Activated naive CD4-positive, alpha-beta T cell treated with anti-CD3 and anti-CD28 coated beads for 36 hours (primary cell): ENCODE measurements at regions of chr2 and their contacts with region 1.

Region 1: GRCh38 chr2:32627814-32628579 is at the start of gene TTC27:
- DNase-seq: peak; percentile 97
- H3K4me3 Mint-ChIP-seq: peak within 1 kb of the TSS; percentile 89
- H3K27ac Mint-ChIP-seq: peak within 1 kb of the TSS; percentile 87
- H3K4me1 Mint-ChIP-seq: peaks cover 31% of the 10 kb centered on the region
- H3K27me3 Mint-ChIP-seq: no peaks in the 10 kb centered on the region
- total RNA-seq, gene TTC27: 25.2 to 27.5 TPM

Region 2: GRCh38 chr2:32168513-32168912 is 459.5 kb before region 1 on chr2:
- CTCF ChIA-PET with region 1: no interaction called
- intact Hi-C with region 1: loop called (anchors 1 kb)
- DNase-seq: no peak
- H3K4me3 Mint-ChIP-seq: no peak overlapping the region
- H3K27ac Mint-ChIP-seq: no peak overlapping the region
- H3K4me1 Mint-ChIP-seq: peaks cover 46% of the 10 kb centered on the region
- H3K27me3 Mint-ChIP-seq: no peaks in the 10 kb centered on the region

Region 3: GRCh38 chr2:32553829-32554432 is 74.1 kb before region 1 on chr2:
- CTCF ChIA-PET with region 1: no interaction called
- intact Hi-C with region 1: loop called (anchors 2 kb)
- DNase-seq: no peak
- H3K4me3 Mint-ChIP-seq: no peak overlapping the region
- H3K27ac Mint-ChIP-seq: no peak overlapping the region
- H3K4me1 Mint-ChIP-seq: no peaks in the 10 kb centered on the region
- H3K27me3 Mint-ChIP-seq: no peaks in the 10 kb centered on the region

Region 4: DNA sequence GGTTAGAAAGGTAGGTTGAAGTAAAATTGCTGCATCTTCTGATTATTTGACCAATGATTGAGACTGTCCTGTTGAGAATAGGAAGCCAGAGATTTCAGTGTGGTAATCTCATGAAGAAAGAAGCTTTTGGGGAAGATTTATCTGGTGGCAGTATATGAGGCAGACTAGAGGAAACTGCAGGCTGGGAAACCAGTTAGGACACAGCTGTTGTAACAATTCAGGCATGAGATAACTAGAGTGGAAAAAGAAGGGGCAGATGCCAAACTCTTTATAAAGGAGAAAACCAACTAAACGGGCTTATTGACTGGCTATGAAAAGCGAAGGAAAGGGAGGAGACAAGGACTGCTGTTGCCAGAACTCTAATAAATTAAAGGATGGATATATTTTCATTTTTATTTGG is 155.5 kb after region 1 on chr2:
- CTCF ChIA-PET with region 1: no interaction called
- intact Hi-C with region 1: no loop called
- DNase-seq: no peak
- H3K4me3 Mint-ChIP-seq: no peak overlapping the region
- H3K27ac Mint-ChIP-seq: no peak overlapping the region
- H3K4me1 Mint-ChIP-seq: peaks cover 2% of the 10 kb centered on the region
- H3K27me3 Mint-ChIP-seq: no peaks in the 10 kb centered on the region

Region 5: GRCh38 chr2:32946314-32947075 is 318.5 kb after region 1 on chr2 and contains the start of gene LTBP1:
- CTCF ChIA-PET with region 1: no interaction called
- intact Hi-C with region 1: loop called (anchors 2 kb)
- DNase-seq: peak; percentile 67
- H3K4me3 Mint-ChIP-seq: peak within 1 kb of the TSS; percentile 74
- H3K27ac Mint-ChIP-seq: no peak within 1 kb of the TSS
- H3K4me1 Mint-ChIP-seq: no peaks in the 10 kb centered on the region
- H3K27me3 Mint-ChIP-seq: peaks cover 24% of the 10 kb centered on the region
- total RNA-seq, gene LTBP1: 0.10 to 0.14 TPM

Region 6: GRCh38 chr2:33599175-33599942 is 971.4 kb after region 1 on chr2 and contains the start of gene FAM98A:
- CTCF ChIA-PET with region 1: no interaction called
- intact Hi-C with region 1: loop called (anchors 1 kb)
- DNase-seq: peak; percentile 98
- H3K4me3 Mint-ChIP-seq: peak within 1 kb of the TSS; percentile 95
- H3K27ac Mint-ChIP-seq: peak within 1 kb of the TSS; percentile 87
- H3K4me1 Mint-ChIP-seq: peaks cover 22% of the 10 kb centered on the region
- H3K27me3 Mint-ChIP-seq: no peaks in the 10 kb centered on the region
- total RNA-seq, gene FAM98A: 45.4 to 46.1 TPM